AG04450 (cell line): ENCODE measurements at regions of chr7 and their contacts with region 1.

Region 1: DNA sequence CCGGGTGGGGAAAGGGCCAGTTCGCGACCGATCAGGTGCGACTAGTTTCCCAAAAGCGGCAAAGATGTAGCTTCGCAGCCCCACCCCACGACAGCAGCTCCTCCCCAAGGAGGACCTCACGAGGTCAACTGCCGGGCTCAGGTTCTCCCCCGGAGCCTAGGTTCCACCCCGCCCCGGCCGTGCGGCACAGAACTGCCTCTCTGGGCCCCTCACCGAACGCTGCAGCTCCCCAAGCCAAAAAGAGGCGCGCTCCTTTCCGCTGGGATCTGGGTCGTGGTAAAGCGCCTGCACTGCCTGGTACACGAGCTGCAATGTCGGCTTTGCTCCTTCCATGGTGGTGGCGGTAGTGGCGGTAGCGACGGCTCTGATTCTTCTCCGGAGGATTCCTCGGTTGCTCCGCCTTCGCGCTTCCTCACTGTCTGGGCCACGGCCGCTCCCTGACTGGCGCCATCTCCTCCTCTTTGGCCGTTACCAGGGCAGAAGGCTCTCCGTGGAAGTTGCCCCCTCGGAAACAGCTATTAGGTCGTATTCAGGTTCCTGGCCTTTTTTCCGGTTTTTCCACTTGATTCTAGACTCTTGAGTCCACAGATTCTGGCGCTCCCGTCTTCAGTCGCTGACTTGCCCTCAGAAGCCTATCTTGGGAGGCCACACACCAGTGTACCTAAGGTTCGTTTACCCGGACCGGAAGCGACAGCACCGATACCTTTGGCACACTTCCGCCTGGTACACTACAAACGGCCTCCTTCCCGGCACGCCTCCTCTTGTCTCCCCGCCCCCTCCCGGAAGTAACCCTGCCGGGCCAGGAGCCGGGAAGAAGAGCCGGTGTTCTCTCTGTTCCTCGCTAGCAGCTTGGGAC is at the start of gene TNPO3:
- DNase-seq: peak; percentile 72
- H3K4me3 ChIP-seq: peak within 1 kb of the TSS; percentile 99
- H3K27ac ChIP-seq: peak within 1 kb of the TSS; percentile 99
- H3K27me3 ChIP-seq: peaks cover 3% of the 10 kb centered on the region
- CTCF ChIP-seq: peak; percentile 2; the same call in 1 of the 2 replicates
- polyA plus RNA-seq, gene TNPO3: 45.5 and 49.5 TPM in 2 replicates

Region 2: DNA sequence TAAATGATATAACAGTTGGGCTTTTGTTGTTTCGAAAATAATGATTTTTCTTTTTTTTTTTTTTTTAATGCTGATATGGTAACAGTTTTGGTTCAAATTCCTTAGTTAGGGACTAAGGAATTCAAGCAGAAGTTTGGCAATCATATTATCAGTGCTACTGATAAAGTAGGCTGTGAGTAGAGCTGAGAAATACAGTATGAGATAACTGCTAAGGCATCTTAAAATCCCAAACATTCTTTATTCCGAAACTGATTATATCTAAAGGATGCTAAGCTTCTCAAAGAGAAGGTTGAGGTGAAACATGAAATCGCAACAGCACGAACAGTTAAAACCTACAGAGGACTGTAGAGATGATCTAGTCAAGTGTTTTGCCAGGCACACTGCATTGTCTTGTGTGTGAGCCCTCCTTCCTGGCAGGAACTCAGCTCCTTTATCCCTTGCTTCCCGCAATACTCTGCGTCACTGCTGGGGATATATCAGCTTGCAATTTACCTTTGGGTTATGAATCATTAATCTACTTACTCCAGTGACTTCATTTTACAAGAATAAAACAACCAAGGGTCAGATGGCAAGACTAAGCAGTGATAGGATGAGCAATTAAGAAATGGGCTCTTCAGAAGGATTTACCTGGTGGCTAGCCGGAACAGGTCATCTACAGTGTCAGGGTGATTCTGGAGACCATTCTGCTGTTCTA is 80.3 kb before region 1 on chr7:
- CTCF ChIA-PET with region 1: no interaction called
- POLR2A ChIA-PET with region 1: interaction called, 13 read pairs
- DNase-seq: no peak
- H3K4me3 ChIP-seq: no peak overlapping the region
- H3K27ac ChIP-seq: no peak overlapping the region
- H3K27me3 ChIP-seq: no peaks in the 10 kb centered on the region
- CTCF ChIP-seq: no peak

Region 3: DNA sequence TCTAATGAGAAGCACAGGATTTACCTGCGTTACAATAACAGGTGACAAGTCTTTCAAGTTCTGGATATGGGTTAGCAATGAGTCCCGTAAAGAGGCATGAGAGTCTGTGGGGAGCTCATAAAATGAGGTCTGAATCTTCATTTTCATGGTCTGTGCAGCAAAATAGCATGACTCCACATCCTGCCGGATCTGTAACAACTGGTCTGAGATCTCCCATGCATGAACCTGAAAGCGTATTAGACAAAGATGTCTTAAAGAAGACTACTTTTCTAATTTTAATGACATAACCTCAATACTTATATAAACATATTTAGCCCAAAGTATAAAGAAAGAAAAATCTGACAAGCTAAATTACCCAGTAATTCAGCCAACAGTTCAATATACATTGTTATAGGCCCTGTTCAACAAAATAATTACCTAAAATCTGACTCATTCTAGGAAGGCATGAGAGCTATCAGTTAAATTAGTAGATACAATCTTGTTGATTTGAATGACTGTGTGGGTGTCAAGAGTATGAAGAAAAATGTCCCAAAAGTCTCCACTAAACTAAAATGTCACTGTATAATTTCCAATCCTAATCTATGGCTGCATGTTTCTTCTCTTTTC is 36.6 kb before region 1 on chr7:
- CTCF ChIA-PET with region 1: no interaction called
- POLR2A ChIA-PET with region 1: no interaction called
- DNase-seq: no peak
- H3K4me3 ChIP-seq: no peak overlapping the region
- H3K27ac ChIP-seq: no peak overlapping the region
- H3K27me3 ChIP-seq: no peaks in the 10 kb centered on the region
- CTCF ChIP-seq: no peak

Region 4: GRCh38 chr7:129066290-129067131 is 11.8 kb after region 1 on chr7:
- CTCF ChIA-PET with region 1: interaction called, 3 read pairs
- POLR2A ChIA-PET with region 1: interaction called, 12 read pairs
- DNase-seq: peak; percentile 16
- H3K4me3 ChIP-seq: no peak overlapping the region
- H3K27ac ChIP-seq: peak overlapping the region; percentile 34
- H3K27me3 ChIP-seq: peaks cover 20% of the 10 kb centered on the region
- CTCF ChIP-seq: no peak